ENCODE measurements at regions of chr18 and their contacts with region 1.

Region 1: GRCh38 chr18:10851824-10852319 is 297.5 kb downstream of the PIEZO2 start:
- DNase-seq: no peak
- ATAC-seq: no peak
- H3K4me3 ChIP-seq: no peak overlapping the region
- H3K27ac ChIP-seq: no peak overlapping the region
- H3K4me1 ChIP-seq: no peaks in the 10 kb centered on the region
- H3K27me3 ChIP-seq: peaks cover 0 to 6% (median 0%) of the 10 kb centered on the region in 9 donors
- CTCF ChIP-seq: peak; percentile 57 to 88 (median 75)
- POLR2A ChIP-seq: no peak

Region 2: DNA sequence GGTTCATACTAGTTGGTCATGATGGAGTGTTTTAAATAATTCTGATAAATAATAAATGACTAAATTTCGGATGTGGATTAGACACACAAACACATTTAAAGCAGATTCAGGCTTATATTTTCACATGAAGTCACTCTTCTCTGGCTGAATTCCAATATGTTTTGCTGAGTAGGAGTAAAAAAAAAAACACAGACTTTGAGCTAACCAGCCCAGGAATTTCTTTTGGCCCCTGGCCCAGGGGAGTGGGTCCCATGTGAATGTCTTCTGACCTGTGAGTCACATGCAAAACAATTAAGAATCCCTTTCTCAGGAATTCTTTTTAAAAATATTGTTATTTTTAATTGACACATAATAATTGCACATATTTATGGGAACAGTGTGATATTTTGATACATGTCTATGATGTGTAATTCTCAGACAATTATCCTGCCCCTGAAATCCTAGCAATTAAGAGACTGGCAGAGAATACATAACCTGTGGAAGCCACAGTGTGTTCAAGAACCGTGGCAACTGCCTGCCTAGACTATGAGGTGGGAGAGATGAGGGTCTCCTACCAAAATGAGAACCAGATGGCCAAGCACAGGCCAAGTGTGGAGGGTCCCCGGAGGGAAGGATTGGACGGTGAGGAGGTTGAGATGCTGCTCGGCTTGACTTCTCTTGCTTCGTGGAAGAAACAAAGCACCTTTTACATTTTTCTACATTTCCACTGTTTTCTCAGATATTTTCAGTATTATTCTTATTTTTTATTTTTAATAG is 61.1 kb after region 1 on chr18:
- intact Hi-C with region 1: no loop called
- DNase-seq: peak in 3 of 5 donors; percentile 36 to 64 (median 45)
- ATAC-seq: peak in 1 of 4 donors; percentile 69
- H3K4me3 ChIP-seq: no peak overlapping the region
- H3K27ac ChIP-seq: no peak overlapping the region
- H3K4me1 ChIP-seq: peaks cover 0 to 8% (median 0%) of the 10 kb centered on the region in 12 donors
- H3K27me3 ChIP-seq: no peaks in the 10 kb centered on the region
- CTCF ChIP-seq: no peak
- POLR2A ChIP-seq: no peak

Region 3: GRCh38 chr18:11040823-11041656 is 189.2 kb after region 1 on chr18:
- intact Hi-C with region 1: loop called (anchors 1 to 5 kb)
- DNase-seq: peak in 2 of 5 donors; percentile 36 to 37
- ATAC-seq: peak in 2 of 4 donors; percentile 58 to 63
- H3K4me3 ChIP-seq: no peak overlapping the region
- H3K27ac ChIP-seq: no peak overlapping the region
- H3K4me1 ChIP-seq: no peaks in the 10 kb centered on the region
- H3K27me3 ChIP-seq: peaks cover 0 to 3% (median 0%) of the 10 kb centered on the region in 9 donors
- CTCF ChIP-seq: peak; percentile 55 to 87 (median 72)
- POLR2A ChIP-seq: no peak

Region 4: DNA sequence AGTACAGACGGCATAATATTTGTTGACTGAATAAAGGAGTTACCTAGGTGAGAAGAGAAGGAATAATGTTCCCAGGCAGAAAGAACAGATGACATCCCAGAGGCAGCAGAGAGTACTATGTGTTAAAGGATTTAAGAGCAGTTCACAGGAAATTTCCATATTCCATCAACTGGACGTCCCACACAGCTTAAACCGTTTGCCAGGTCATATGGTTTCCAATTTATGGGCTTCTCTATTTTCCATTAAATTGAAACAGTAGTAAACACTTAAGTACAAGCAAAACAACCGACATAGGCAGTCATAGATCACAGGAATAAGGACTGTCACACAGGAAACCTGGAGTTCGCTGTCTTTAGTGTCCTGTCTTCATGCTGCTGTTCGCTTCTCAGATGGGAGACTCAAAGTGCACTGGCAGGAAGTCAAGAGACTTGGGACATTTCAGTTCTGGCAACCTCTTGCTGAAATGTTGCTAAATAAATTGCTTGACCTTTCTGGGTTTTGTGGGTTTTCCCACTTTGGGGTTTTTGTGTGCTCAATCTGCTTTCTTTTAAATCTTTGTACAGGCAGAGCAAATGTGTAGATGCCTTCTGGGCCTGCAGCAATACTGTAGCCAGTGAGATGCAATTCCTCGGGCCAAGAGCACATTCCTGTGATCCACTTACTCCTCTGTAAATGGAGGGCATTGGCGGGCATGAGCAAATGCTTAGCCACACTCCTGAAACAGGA is 303.3 kb after region 1 on chr18:
- intact Hi-C with region 1: loop called (anchors 2 to 5 kb)
- DNase-seq: no peak
- ATAC-seq: no peak
- H3K4me3 ChIP-seq: no peak overlapping the region
- H3K27ac ChIP-seq: no peak overlapping the region
- H3K4me1 ChIP-seq: no peaks in the 10 kb centered on the region
- H3K27me3 ChIP-seq: peaks cover 2 to 58% (median 13%) of the 10 kb centered on the region in 9 donors
- CTCF ChIP-seq: no peak
- POLR2A ChIP-seq: no peak

Region 5: DNA sequence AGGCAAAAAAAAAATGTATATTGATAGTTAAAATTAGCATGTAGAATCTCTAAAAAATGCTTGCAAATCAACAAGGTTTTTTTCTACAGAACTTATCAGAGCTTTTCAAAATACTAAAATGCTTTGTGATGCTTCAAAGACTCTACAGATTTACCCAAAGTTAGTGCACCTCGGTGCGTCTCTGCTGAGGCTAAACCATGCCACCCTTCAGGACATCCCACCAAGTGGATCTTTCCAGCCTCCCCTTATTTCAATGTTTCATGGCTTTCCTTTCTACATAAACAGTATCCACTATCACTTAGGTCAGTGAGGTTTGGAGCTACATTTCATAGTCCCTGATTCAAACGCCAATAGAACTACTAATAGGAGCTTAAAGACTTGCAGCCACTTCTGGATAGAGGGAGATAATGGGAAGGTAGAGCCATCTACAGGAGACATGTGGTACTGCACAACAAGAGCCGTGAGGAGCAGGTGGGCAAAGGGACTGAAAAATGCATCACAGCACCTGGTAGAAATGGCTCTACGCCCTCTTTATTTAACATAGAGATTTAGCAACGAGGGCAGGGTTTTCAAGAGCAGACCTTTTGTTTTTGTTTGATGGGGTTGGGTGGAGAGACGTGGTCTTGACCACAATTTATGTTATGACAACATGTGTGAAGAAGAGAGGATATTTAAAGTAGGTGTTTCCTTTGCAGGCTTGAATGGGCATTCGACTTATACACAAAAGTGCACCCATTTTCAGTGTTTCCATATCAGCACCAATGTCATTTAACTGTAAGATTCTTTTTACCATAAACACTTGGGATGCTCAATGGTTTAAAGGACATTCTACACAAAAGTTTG is 701.4 kb after region 1 on chr18:
- intact Hi-C with region 1: loop called in 9 of 10 experiments (anchors 2 to 10 kb)
- DNase-seq: no peak
- ATAC-seq: peak; percentile 55 to 75 (median 64)
- H3K4me3 ChIP-seq: no peak overlapping the region
- H3K27ac ChIP-seq: no peak overlapping the region
- H3K4me1 ChIP-seq: no peaks in the 10 kb centered on the region
- H3K27me3 ChIP-seq: peaks cover 0 to 11% (median 0%) of the 10 kb centered on the region in 9 donors
- CTCF ChIP-seq: peak; percentile 80 to 92 (median 86)
- POLR2A ChIP-seq: no peak

Measured in heart left ventricle (tissue), 16 donors.